A673 (cell line): ENCODE measurements at regions of chr2 and their contacts with region 1.

Region 1: GRCh38 chr2:12716282-12717190 is at the start of gene TRIB2:
- DNase-seq: peak; percentile 95
- H3K4me3 ChIP-seq: peak within 1 kb of the TSS; percentile 87
- H3K27ac ChIP-seq: peak within 1 kb of the TSS; percentile 91
- H3K4me1 ChIP-seq: peaks cover 31% of the 10 kb centered on the region
- H3K27me3 ChIP-seq: no peaks in the 10 kb centered on the region
- CTCF ChIP-seq: 0 out of 2 replicates have a peak, but pooled peaks have one; percentile 10
- total RNA-seq, gene TRIB2: 92.3 and 100.0 TPM in 2 replicates

Region 2: GRCh38 chr2:11863513-11864328 is 852.8 kb before region 1 on chr2:
- CTCF ChIA-PET with region 1: interaction called, 6 read pairs
- POLR2A ChIA-PET with region 1: no interaction called
- intact Hi-C with region 1: loop called (anchors 2 kb)
- DNase-seq: peak; percentile 92
- H3K4me3 ChIP-seq: no peak overlapping the region
- H3K27ac ChIP-seq: peak overlapping the region; percentile 9
- H3K4me1 ChIP-seq: peaks cover 7% of the 10 kb centered on the region
- H3K27me3 ChIP-seq: no peaks in the 10 kb centered on the region
- CTCF ChIP-seq: peak; percentile 97

Region 3: DNA sequence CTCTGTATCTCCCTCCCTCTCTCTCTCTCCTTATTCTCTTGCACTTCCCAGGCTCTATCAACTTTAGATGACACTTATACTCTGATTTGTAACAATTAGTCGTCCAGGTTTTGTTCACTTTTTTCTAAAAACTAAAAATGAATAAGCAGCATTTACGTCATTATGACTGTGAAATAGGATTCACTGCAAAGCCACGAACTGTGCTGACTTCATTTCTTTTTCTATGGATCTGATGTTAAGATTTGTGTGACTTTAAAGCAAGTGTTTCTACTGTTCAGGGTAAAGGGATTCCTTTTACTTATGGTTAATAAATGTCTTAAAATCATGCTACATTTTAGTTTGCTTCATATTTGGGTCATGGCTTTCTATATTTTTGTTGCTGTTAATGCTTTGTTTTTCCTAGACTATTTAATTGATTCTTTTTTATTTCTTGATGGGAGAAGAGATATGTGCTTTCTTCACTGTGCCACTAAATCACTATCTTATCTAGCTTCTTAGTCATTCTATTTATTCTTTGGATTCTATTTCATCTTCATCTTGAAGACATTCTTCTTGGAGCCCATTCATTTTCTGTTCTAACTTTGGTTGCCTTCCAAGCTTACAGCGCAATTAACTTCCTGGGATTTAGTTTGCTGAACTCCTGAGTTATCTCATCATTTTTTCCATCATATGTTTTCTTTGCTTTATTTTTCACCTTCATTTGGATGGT is 480.2 kb before region 1 on chr2:
- CTCF ChIA-PET with region 1: interaction called, 10 read pairs
- POLR2A ChIA-PET with region 1: no interaction called
- intact Hi-C with region 1: no loop called
- DNase-seq: no peak
- H3K4me3 ChIP-seq: no peak overlapping the region
- H3K27ac ChIP-seq: no peak overlapping the region
- H3K4me1 ChIP-seq: no peaks in the 10 kb centered on the region
- H3K27me3 ChIP-seq: no peaks in the 10 kb centered on the region
- CTCF ChIP-seq: no peak

Region 4: DNA sequence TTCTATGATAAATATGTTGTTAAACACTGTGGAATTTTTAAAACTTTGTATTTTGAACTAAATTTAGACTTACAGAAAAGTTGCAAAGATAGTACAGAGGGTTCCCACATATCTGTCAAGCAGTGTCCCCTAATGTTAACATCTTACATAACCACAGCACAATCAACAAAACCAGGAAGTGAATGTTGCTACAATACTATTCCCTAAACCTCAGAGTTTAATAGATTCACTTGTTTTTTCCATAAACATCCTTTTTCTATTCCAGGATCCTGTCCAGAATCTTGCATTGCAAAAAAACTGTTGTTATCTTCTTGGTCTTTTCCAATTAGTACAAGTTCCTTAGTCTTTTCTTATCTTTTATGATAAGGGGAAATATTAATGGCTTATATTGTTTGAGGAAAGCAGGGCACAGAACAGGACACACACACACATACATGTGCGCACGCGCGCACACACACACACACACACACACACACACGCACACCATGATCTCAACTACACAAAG is 250.9 kb before region 1 on chr2:
- CTCF ChIA-PET with region 1: interaction called, 3 read pairs
- POLR2A ChIA-PET with region 1: no interaction called
- intact Hi-C with region 1: loop called (anchors 2 kb)
- DNase-seq: peak; percentile 15
- H3K4me3 ChIP-seq: no peak overlapping the region
- H3K27ac ChIP-seq: peak overlapping the region; percentile 53
- H3K4me1 ChIP-seq: peaks cover 14% of the 10 kb centered on the region
- H3K27me3 ChIP-seq: no peaks in the 10 kb centered on the region
- CTCF ChIP-seq: no peak

Region 5: DNA sequence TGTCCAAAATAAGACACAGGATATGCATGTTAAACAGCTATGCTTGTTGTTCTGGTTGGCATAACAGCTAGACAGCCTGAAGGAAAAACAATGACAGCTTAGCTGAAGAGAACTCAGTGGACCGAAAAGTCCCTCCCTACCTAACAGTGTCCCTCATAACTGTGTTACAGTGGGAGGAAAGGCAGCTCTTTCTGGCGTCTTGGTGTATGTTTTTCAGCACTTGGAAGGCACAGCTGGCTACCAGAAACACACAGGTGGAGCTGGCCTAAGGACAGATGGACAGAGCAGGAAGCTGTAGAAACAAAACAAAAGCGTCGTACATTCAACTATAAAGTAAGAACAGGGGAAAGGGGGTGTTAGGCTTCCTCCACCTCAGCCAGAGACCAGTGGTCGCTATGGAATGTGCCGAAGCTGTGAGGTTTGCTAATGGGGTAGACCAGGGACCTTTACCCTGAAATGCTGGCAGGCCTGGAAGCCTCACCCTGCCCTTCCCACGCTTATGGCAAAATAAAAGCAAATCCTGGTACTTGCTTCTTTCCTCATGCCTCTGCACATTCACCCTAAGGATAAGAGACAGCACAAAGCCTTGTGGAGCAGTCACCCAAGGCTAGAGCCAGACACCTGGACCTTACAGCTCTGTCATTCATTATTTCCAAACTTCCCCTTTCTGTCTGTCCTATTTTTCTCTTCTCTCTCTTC is 103.2 kb before region 1 on chr2:
- CTCF ChIA-PET with region 1: interaction called, 3 read pairs
- POLR2A ChIA-PET with region 1: no interaction called
- intact Hi-C with region 1: loop called (anchors 5 kb)
- DNase-seq: peak; percentile 55
- H3K4me3 ChIP-seq: no peak overlapping the region
- H3K27ac ChIP-seq: peak overlapping the region; percentile 45
- H3K4me1 ChIP-seq: peaks cover 23% of the 10 kb centered on the region
- H3K27me3 ChIP-seq: no peaks in the 10 kb centered on the region
- CTCF ChIP-seq: no peak

Region 6: DNA sequence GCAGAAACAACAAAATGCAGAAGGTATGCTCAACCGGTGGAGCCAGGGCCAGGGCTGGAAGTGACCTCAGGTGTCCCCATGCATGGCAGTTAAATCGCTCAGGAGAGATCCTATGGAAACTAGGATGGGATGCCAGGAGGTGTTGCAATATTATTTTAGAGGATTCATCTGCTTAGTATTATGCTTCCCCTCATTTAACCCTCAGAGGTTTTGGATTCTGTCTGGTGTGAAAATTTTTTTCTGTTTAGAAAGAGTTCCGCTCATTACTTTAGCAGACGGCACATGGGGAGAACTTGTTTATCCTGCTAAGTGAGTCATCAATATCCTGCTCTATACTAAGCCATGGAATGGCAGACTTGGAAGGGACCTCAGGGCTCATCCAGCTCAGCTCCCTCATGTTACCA is 42.7 kb after region 1 on chr2:
- CTCF ChIA-PET with region 1: no interaction called
- POLR2A ChIA-PET with region 1: no interaction called
- intact Hi-C with region 1: no loop called
- DNase-seq: peak; percentile 58
- H3K4me3 ChIP-seq: no peak overlapping the region
- H3K27ac ChIP-seq: no peak overlapping the region
- H3K4me1 ChIP-seq: peaks cover 19% of the 10 kb centered on the region
- H3K27me3 ChIP-seq: no peaks in the 10 kb centered on the region
- CTCF ChIP-seq: no peak

Region 7: DNA sequence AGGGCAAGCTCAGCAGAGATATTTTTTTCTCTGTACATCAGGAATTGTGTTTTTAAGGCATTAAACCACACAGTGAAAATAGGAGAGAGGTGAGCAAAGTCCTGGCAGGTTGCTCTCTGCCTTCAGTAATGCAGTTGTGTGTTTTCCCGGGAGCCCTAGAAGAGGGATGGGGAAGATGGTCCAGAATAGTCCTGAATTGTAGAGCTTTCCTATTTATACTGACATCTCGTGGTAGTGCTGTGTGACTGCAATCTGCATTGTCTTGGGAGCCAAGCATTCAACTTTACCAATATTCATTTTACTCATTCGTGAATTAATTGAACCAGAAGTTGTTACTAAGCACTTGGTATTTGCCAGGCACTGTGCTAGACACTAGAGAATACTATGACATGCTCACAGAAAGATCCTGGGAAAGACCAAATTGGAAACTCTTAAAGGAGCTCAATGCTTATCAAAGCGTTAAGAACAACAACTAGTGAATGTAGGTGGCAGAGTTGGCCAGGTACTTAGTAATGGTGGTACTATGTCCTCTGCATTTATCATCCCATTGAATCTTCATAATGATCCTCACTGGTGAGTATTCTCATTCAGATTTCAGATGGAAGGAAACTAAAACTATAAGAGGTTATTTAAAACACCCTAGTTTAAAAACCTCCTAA is 214.8 kb after region 1 on chr2:
- CTCF ChIA-PET with region 1: interaction called, 12 read pairs
- POLR2A ChIA-PET with region 1: interaction called, 3 read pairs
- intact Hi-C with region 1: loop called (anchors 2 kb)
- DNase-seq: peak; percentile 72
- H3K4me3 ChIP-seq: no peak overlapping the region
- H3K27ac ChIP-seq: no peak overlapping the region
- H3K4me1 ChIP-seq: peaks cover 33% of the 10 kb centered on the region
- H3K27me3 ChIP-seq: no peaks in the 10 kb centered on the region
- CTCF ChIP-seq: peak; percentile 94

Region 8: DNA sequence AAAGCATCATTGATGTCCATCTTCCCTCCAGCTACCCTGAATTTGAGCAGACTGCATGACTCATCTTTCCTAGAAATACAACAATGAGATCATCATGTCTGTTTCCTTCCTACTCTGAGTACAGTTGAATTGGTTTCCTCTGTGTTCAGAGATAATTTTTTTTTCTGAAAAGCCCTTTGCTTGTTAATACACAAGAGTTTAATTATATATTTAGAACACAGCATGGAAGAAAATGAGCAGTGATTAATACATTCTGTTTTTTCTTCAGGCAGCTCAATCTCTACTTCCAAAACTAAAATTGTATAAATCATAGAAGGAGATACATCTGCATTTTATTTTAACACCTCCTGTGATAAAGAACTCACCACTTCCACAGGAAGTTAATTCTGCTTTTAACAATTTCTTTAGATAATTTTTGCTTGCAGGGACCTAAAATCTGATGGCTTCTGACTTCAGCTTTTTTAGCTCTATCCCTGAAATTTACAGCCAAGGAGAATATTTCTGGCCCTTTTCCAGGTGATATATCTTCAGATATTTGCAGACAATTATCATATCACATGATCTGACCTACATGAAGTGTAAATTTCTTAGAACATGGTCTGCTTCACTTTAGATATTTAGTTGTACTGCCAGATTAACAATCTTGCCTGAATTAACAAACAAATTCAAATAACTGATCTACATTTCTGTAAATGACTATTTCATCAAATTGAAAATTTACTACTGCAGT is 249.2 kb after region 1 on chr2:
- CTCF ChIA-PET with region 1: no interaction called
- POLR2A ChIA-PET with region 1: no interaction called
- intact Hi-C with region 1: no loop called
- DNase-seq: peak; percentile 91
- H3K4me3 ChIP-seq: no peak overlapping the region
- H3K27ac ChIP-seq: peak overlapping the region; percentile 31
- H3K4me1 ChIP-seq: peaks cover 21% of the 10 kb centered on the region
- H3K27me3 ChIP-seq: no peaks in the 10 kb centered on the region
- CTCF ChIP-seq: no peak